ENCODE measurements at regions of chr16 and their contacts with region 1.

Region 1: DNA sequence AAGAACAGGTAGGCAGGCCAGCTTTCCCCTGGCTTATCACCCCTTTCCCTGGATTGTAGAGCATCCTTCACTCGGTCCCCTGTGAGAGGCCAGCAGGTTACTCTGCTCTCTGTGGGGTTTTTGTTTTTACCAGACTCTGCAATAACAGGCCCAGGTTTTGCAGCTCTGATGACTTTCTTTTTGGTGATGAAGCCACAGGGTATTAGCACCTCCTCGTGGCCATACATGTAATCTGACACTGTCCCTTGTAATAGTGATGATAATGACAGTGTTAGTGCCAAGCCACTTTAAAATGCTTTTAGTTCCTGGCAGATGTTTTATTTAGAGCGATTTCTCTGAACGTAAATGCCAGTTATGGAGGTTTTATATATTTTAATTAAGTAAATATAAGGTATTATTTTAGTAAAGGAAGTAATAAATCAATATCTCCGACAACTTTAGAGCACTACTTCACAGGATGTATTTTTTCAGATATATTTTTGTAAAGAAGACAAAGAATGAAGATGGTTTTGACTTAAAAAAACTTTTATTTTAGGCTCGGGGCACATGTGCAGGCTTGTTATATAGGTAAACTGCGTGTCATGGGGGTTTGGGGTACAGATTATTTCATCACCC is 38.0 kb upstream of the CPHXL start:
- DNase-seq: peak; percentile 53
- ATAC-seq: peak; percentile 90
- H3K4me3 ChIP-seq: no peak overlapping the region
- H3K27ac ChIP-seq: no peak overlapping the region
- H3K4me1 ChIP-seq: peaks cover 5% of the 10 kb centered on the region
- H3K27me3 ChIP-seq: no peaks in the 10 kb centered on the region; a peak in 1 of 4 replicates
- CTCF ChIP-seq: peak; percentile 80 to 91 (median 91)
- EP300 ChIP-seq: no peak
- POLR2A ChIP-seq: no peak
- RAD21 ChIP-seq: peak; percentile 98

Region 2: DNA sequence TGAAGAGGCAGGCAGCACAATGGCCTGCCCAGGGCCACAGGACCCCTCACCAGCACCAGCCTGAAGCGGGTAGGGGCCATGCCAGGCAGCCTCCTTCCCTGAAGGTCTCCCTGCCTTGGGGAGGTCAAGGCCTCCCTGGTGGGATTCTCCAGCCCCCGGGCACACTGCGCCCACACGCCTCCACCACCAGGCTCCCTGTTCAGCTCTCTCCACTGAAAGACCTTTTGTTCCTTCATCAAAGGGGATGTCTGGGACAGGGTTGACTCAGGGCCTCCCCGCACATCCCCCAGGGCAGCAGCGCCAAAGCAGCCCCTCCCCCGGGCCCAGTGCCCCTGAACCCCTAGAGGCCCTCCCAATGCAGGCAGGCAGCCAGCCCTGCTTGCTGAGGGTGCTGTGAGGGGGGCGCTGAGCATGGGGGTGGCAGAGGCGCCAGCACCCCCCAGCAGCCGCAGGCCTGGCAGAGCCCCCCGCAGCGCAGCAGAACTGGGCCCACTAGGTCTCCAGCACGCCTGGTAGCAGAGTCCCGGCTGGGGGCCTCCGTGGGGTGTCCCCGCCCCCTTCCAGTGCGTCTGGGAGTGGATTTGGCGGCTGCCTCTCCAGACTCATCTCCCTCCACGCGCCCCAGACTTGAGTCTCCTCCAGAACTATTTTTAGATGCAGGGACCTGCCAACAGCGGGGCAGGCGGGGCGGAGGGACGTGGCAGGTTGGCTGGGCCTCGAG is 526.0 kb before region 1 on chr16:
- CTCF ChIA-PET with region 1: no interaction called
- POLR2A ChIA-PET with region 1: no interaction called
- RAD21 ChIA-PET with region 1: no interaction called
- SMC1A ChIA-PET with region 1: no interaction called
- in situ Hi-C with region 1: no loop called
- intact Hi-C with region 1: loop called (anchors 10 kb)
- DNase-seq: no peak
- ATAC-seq: no peak
- H3K4me3 ChIP-seq: no peak overlapping the region
- H3K27ac ChIP-seq: no peak overlapping the region
- H3K4me1 ChIP-seq: no peaks in the 10 kb centered on the region
- H3K27me3 ChIP-seq: no peaks in the 10 kb centered on the region
- CTCF ChIP-seq: no peak
- EP300 ChIP-seq: no peak
- POLR2A ChIP-seq: no peak
- RAD21 ChIP-seq: no peak

Region 3: GRCh38 chr16:75471723-75472633 is 292.3 kb before region 1 on chr16:
- CTCF ChIA-PET with region 1: interaction called, 23 read pairs
- POLR2A ChIA-PET with region 1: no interaction called
- RAD21 ChIA-PET with region 1: interaction called, 17 read pairs
- SMC1A ChIA-PET with region 1: interaction called, 20 read pairs
- in situ Hi-C with region 1: loop called (anchors 5 kb)
- intact Hi-C with region 1: loop called (anchors 1 kb)
- DNase-seq: no peak
- ATAC-seq: peak; percentile 94
- H3K4me3 ChIP-seq: no peak overlapping the region
- H3K27ac ChIP-seq: no peak overlapping the region
- H3K4me1 ChIP-seq: no peaks in the 10 kb centered on the region
- H3K27me3 ChIP-seq: no peaks in the 10 kb centered on the region
- CTCF ChIP-seq: peak; percentile 74 to 85 (median 80)
- EP300 ChIP-seq: no peak
- POLR2A ChIP-seq: no peak
- RAD21 ChIP-seq: peak; percentile 86

Region 4: DNA sequence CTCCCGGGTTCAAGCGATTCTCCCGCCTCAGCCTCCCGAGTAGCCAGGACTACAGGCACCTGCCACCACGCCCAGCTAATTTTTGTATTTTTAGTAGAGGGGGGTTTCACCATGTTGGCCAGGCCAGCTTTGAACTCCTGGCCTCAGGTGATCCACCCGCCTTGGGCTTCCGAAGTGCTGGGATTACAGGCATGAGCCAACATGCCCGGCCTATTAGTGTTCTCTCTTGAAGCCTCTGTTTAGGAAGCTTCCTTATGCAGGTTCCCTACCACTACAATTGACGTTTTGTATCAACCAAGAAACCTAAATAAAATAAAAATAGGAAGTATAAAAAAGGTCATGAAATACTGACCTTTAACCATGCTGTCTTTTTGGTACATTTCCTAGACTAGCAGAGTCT is 244.4 kb before region 1 on chr16:
- CTCF ChIA-PET with region 1: interaction called, 11 read pairs
- POLR2A ChIA-PET with region 1: no interaction called
- RAD21 ChIA-PET with region 1: interaction called, 5 read pairs
- SMC1A ChIA-PET with region 1: interaction called, 7 read pairs
- in situ Hi-C with region 1: no loop called
- intact Hi-C with region 1: loop called (anchors 2 kb)
- DNase-seq: no peak
- ATAC-seq: no peak
- H3K4me3 ChIP-seq: no peak overlapping the region
- H3K27ac ChIP-seq: no peak overlapping the region
- H3K4me1 ChIP-seq: no peaks in the 10 kb centered on the region
- H3K27me3 ChIP-seq: no peaks in the 10 kb centered on the region
- CTCF ChIP-seq: no peak
- EP300 ChIP-seq: no peak
- POLR2A ChIP-seq: no peak
- RAD21 ChIP-seq: no peak

Region 5: DNA sequence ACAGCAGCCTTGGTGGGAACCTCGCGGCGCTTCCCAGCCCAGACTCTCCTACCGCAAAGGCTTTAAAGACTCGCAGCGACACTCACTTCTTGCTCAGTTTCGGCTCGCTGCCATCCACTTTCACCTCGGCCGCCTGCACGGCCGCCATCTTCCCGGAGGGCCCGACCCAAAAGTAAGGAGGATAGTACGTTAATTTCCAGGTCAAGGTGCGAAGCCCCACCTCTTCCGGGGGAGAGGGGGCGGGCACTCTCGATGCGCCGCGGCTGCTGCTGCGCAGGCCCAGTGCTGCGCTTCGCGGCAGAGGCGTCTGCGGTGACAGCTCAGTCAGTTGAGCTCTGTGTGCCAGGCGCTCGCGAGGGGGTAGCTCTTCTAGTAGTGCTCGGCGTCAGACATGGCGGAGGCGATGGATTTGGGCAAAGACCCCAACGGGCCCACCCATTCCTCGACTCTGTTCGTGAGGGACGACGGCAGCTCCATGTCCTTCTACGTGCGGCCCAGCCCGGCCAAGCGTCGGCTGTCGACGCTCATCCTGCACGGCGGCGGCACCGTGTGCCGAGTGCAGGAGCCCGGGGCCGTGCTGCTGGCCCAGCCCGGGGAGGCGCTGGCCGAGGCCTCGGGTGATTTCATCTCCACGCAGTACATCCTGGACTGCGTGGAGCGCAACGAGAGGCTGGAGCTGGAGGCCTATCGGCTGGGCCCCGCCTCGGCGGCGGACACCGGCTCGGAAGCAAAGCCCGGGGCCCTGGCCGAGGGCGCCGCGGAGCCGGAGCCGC is 116.6 kb before region 1 on chr16 and contains the starts of genes KARS1 and TERF2IP:
- CTCF ChIA-PET with region 1: interaction called, 10 read pairs
- POLR2A ChIA-PET with region 1: interaction called, 5 read pairs
- RAD21 ChIA-PET with region 1: interaction called, 10 read pairs
- SMC1A ChIA-PET with region 1: interaction called, 8 read pairs
- in situ Hi-C with region 1: loop called (anchors 5 kb)
- intact Hi-C with region 1: loop called (anchors 1 kb)
- DNase-seq: peak; percentile 85
- ATAC-seq: peak; percentile 91
- H3K4me3 ChIP-seq: peak within 1 kb of the TSS; percentile 85
- H3K27ac ChIP-seq: peak within 1 kb of the TSS; percentile 86
- H3K4me1 ChIP-seq: peaks cover 25% of the 10 kb centered on the region
- H3K27me3 ChIP-seq: no peaks in the 10 kb centered on the region; a peak in 1 of 4 replicates
- CTCF ChIP-seq: no peak
- EP300 ChIP-seq: no peak
- POLR2A ChIP-seq: peak; percentile 98
- RAD21 ChIP-seq: no peak
- polyA plus RNA-seq, gene KARS1: 187 to 207 TPM
- polyA plus RNA-seq, gene TERF2IP: 19.6 to 40.6 TPM

Region 6: DNA sequence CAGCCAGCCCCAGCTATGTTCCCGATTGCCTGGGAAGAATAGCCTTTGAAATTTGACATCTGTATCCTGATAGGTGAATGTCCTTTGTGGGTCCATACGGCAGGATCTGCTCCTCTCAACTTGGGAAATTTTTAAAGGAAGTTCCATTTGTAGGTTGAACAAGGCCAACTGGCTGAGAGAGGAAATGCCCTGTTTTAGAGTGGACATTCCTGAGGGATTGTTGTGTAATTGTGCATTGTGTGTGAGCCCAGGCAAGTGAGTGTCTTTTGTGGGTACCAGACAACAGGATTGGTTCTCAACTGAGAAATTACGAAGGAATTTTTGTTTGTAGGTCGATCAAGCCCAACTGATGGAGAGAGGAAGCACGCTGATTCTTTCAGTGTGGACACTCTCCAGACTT is 84.9 kb before region 1 on chr16:
- CTCF ChIA-PET with region 1: no interaction called
- POLR2A ChIA-PET with region 1: no interaction called
- RAD21 ChIA-PET with region 1: no interaction called
- SMC1A ChIA-PET with region 1: no interaction called
- in situ Hi-C with region 1: no loop called
- intact Hi-C with region 1: no loop called
- DNase-seq: no peak
- ATAC-seq: no peak
- H3K4me3 ChIP-seq: no peak overlapping the region
- H3K27ac ChIP-seq: no peak overlapping the region
- H3K4me1 ChIP-seq: no peaks in the 10 kb centered on the region
- H3K27me3 ChIP-seq: no peaks in the 10 kb centered on the region
- CTCF ChIP-seq: no peak
- EP300 ChIP-seq: no peak
- POLR2A ChIP-seq: no peak
- RAD21 ChIP-seq: no peak

Region 7: GRCh38 chr16:75801307-75801706 is 37.0 kb after region 1 on chr16:
- CTCF ChIA-PET with region 1: no interaction called
- POLR2A ChIA-PET with region 1: no interaction called
- RAD21 ChIA-PET with region 1: no interaction called
- SMC1A ChIA-PET with region 1: no interaction called
- in situ Hi-C with region 1: no loop called
- intact Hi-C with region 1: no loop called
- DNase-seq: no peak
- ATAC-seq: no peak
- H3K4me3 ChIP-seq: no peak overlapping the region
- H3K27ac ChIP-seq: no peak overlapping the region
- H3K4me1 ChIP-seq: 0 out of 2 replicates have a peak, but pooled peaks cover 3% of the 10 kb centered on the region
- H3K27me3 ChIP-seq: no peaks in the 10 kb centered on the region
- CTCF ChIP-seq: peak in 1 of 3 experiments; percentile 18; a peak in 2 of 6 replicates
- EP300 ChIP-seq: no peak
- POLR2A ChIP-seq: no peak
- RAD21 ChIP-seq: 0 out of 2 replicates have a peak, but pooled peaks have one; percentile 14